Breast epithelium (tissue), 4 donors: ENCODE measurements at regions of chr9 and their contacts with region 1.

Region 1: GRCh38 chr9:116189683-116190082 is 36.1 kb downstream of the PAPPA start:
- DNase-seq: peak; percentile 49 to 54
- H3K4me3 ChIP-seq: no peak overlapping the region
- H3K27ac ChIP-seq: no peak overlapping the region
- H3K4me1 ChIP-seq: no peaks in the 10 kb centered on the region
- H3K27me3 ChIP-seq: no peaks in the 10 kb centered on the region
- CTCF ChIP-seq: no peak
- POLR2A ChIP-seq: no peak

Region 2: GRCh38 chr9:116124461-116125090 is 65.1 kb before region 1 on chr9:
- intact Hi-C with region 1: loop called (anchors 2 kb)
- DNase-seq: no peak
- H3K4me3 ChIP-seq: no peak overlapping the region
- H3K27ac ChIP-seq: no peak overlapping the region
- H3K4me1 ChIP-seq: no peaks in the 10 kb centered on the region
- H3K27me3 ChIP-seq: no peaks in the 10 kb centered on the region
- CTCF ChIP-seq: no peak
- POLR2A ChIP-seq: no peak